ENCODE measurements at regions of chr9 and their contacts with region 1.

Region 1: GRCh38 chr9:96009690-96010472 is 134.4 kb downstream of the ERCC6L2 start:
- DNase-seq: peak; percentile 63
- ATAC-seq: peak; percentile 79
- H3K4me3 Mint-ChIP-seq: peak overlapping the region; percentile 64
- H3K27ac Mint-ChIP-seq: peak overlapping the region; percentile 92
- H3K4me1 Mint-ChIP-seq: peaks cover 45% of the 10 kb centered on the region
- H3K27me3 Mint-ChIP-seq: no peaks in the 10 kb centered on the region

Region 2: DNA sequence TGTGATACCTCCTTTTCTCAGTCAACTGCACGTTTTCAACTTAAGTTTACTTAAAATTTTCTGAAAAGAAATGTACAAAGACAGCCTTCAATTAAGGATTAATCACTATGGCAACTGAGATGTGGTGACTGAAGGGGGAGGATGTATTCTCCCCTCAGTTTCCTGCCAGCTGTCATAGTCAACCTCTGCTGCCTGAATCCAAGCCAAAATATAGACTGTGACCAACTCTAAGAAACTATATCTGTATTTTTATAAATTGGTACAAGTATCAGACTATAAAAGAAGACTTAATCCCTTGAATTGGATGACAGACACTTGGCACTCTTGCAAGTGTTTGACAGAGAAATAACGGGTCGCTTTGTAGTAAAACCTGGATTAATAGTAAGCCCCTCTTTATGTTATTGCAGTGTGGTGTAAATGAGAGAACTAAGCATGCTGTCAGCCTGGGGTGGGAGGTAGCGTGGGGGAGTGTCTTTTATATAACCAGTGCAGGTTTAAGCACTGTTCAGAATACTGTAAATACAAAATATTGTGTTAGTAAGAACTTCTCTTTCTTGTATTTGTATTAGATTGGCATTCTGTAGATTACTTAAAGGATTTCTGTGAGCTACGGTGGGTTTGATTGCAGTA is 28.0 kb before region 1 on chr9:
- POLR2A ChIA-PET with region 1: interaction called, 10 read pairs
- DNase-seq: no peak
- ATAC-seq: peak; percentile 93
- H3K4me3 Mint-ChIP-seq: peak overlapping the region; percentile 35
- H3K27ac Mint-ChIP-seq: peak overlapping the region; percentile 46
- H3K4me1 Mint-ChIP-seq: peaks cover 18% of the 10 kb centered on the region
- H3K27me3 Mint-ChIP-seq: no peaks in the 10 kb centered on the region

Region 3: DNA sequence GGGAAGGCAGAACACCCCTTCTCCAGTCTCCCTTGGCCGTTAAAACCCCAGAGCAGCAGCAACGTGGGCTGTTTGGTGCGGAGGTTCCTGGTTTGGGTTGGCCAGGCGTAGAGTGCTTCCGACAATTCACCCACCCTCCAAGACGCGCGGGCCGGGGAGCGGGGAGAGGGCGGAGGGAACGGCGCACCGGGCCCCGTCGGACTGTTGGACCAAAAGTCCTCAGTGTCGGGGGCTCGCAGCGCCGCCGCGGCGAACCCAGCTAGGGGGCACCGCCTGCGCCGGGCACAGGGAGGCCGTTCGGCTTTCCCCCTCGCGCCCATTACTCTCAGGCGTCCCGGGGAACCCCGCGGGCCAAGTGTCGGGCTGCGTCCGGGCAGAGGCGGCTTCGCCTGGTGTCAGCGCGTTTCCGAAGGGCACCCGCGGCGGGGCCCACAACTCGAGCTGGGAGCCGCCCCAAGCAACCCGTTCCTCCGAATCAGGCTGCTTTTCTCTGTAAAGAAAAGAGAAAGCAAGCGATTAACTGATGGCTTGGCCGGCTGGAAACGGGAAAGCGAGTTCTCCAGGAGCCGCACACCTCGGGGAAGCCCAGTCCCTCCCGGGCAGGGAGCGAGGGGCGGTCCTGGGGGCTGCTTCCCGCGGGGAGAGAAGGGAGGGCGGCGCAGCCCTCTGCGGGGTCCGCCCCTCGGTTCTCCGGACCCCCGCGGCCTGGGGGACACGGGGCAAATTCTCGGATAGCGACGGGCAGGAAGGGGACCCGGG is 11.1 kb after region 1 on chr9:
- POLR2A ChIA-PET with region 1: interaction called, 35 read pairs
- DNase-seq: peak; percentile 76
- ATAC-seq: peak; percentile 42
- H3K4me3 Mint-ChIP-seq: peak overlapping the region; percentile 90
- H3K27ac Mint-ChIP-seq: peak overlapping the region; percentile 94
- H3K4me1 Mint-ChIP-seq: peaks cover 59% of the 10 kb centered on the region
- H3K27me3 Mint-ChIP-seq: peaks cover 9% of the 10 kb centered on the region

Region 4: DNA sequence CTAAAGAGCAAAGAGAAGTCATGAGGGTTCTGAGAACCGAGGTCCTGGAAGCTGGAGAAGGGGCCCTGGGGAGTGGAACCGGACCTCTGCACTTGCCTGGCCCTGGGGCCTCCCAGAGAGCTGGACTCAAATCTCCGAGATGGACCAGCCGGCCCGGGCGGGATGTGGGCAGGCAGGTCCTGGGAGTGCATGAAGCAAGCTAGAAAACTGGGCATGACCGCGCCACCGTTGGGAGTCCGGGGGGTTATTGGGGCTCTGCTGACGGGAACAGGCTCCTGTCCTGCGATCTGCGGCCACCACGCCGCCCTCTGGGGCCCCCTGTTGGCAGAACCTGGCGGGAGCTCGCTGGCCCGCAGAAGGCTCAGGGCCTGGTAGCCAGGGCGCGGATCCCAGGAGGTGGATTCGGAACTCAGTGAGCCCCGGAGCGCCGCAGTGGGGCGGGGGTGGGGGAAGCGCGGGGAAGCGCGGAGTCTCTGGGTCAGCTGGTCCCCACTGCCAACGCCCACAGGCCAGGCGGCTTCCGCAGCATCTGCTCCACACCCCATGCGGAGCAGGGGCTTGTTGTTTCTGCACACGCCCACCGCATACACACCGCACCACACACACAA is 16.2 kb after region 1 on chr9:
- POLR2A ChIA-PET with region 1: interaction called, 35 read pairs
- DNase-seq: no peak
- ATAC-seq: no peak
- H3K4me3 Mint-ChIP-seq: peak overlapping the region; percentile 8
- H3K27ac Mint-ChIP-seq: peak overlapping the region; percentile 37
- H3K4me1 Mint-ChIP-seq: peaks cover 39% of the 10 kb centered on the region
- H3K27me3 Mint-ChIP-seq: peaks cover 19% of the 10 kb centered on the region

Region 5: GRCh38 chr9:96061293-96061987 is 51.6 kb after region 1 on chr9:
- POLR2A ChIA-PET with region 1: no interaction called
- DNase-seq: peak; percentile 46
- ATAC-seq: peak; percentile 65
- H3K4me3 Mint-ChIP-seq: no peak overlapping the region
- H3K27ac Mint-ChIP-seq: no peak overlapping the region
- H3K4me1 Mint-ChIP-seq: peaks cover 4% of the 10 kb centered on the region
- H3K27me3 Mint-ChIP-seq: no peaks in the 10 kb centered on the region

Measured in activated naive CD8-positive, alpha-beta T cell treated with anti-CD3 and anti-CD28 coated beads, Interleukin-2, amount 10 ng/mL, durations not matched to agents 7 days and 5 days (primary cell).